ENCODE measurements at regions of chr18 and their contacts with region 1.

Region 1: DNA sequence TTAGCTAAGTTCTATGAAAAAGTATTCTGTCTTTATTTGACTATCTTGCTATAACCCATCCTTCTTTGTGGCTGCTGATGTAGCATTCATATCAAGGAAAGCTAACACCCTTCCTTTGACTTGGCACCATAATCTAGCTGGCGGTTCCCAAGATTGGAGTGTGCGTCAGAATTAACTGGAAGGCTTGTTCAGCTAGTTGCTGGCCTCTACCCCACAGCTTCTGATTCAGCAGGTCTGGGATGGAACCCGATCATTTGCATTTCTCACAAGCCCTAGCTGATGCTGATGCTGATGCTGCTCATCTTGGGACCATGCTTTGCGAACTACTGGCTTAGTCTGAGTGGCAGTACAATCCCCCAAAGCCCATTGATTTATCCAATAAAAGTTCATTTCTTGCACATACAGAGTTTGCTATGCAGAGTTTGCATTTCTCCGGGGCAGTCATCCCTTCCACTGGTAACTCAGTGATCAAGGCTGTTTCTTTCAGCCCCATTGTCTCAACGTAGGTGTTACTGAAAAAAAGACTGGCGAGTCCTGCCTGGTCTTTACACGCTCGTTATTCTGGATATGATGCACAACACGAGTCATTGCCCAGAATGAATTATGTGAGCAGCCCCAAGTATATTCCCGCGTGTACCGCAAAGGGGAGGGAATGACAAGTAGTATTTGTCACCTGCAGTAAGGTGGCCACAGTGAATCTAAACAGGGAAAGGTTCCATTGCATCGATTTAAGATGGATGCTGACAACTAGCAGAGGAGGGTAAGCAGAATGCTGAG is 96.5 kb downstream of the ZNF532 start:
- DNase-seq: no peak
- H3K4me3 ChIP-seq: no peak overlapping the region
- H3K27ac ChIP-seq: no peak overlapping the region
- H3K4me1 ChIP-seq: peaks cover 0 to 21% (median 9%) of the 10 kb centered on the region in 4 donors
- H3K27me3 ChIP-seq: no peaks in the 10 kb centered on the region
- CTCF ChIP-seq: no peak
- EP300 ChIP-seq: no peak
- POLR2A ChIP-seq: no peak

Region 2: GRCh38 chr18:58257461-58257860 is 703.7 kb before region 1 on chr18:
- intact Hi-C with region 1: no loop called
- DNase-seq: no peak
- H3K4me3 ChIP-seq: no peak overlapping the region
- H3K27ac ChIP-seq: peak overlapping the region in 3 of 4 donors; percentile 43 to 81 (median 77)
- H3K4me1 ChIP-seq: peaks cover 0 to 50% (median 27%) of the 10 kb centered on the region in 4 donors
- H3K27me3 ChIP-seq: no peaks in the 10 kb centered on the region
- CTCF ChIP-seq: no peak
- EP300 ChIP-seq: no peak
- POLR2A ChIP-seq: no peak

Region 3: DNA sequence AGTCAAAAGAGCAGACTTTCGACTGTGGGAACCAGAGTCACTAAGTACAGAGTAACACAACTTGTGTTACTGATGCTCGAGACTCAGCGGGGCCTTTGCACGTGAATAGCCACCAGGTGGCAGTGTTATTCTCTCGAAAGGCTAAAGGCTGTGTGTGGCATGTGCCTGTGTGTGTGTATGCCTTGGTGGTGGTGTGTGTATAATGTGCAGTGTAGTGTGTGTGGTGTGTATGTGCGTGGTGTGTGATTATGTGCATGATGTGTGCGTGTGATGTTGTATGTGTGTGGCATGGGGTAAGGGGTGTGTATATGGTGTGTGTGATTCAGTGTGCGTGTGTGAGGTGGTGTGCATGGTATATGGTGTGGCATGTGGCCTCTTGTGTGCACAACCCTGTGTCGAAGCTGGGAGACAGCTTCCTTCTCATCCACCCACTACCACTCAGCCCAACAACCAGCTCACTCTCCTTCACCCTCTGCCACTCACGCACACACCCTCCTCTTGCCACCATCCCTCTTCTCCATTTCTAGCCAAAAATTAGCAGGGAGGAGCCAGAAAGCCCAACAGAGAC is 179.4 kb before region 1 on chr18:
- intact Hi-C with region 1: loop called (anchors 10 kb)
- DNase-seq: peak; percentile 85
- H3K4me3 ChIP-seq: no peak overlapping the region
- H3K27ac ChIP-seq: no peak overlapping the region
- H3K4me1 ChIP-seq: peaks cover 0 to 28% (median 14%) of the 10 kb centered on the region in 4 donors
- H3K27me3 ChIP-seq: no peaks in the 10 kb centered on the region
- CTCF ChIP-seq: peak; percentile 93 to 97 (median 94)
- EP300 ChIP-seq: no peak
- POLR2A ChIP-seq: no peak

Measured in sigmoid colon (tissue), 7 donors.